Mammary epithelial cell (primary cell): ENCODE measurements at regions of chr9 and their contacts with region 1.

Region 1: DNA sequence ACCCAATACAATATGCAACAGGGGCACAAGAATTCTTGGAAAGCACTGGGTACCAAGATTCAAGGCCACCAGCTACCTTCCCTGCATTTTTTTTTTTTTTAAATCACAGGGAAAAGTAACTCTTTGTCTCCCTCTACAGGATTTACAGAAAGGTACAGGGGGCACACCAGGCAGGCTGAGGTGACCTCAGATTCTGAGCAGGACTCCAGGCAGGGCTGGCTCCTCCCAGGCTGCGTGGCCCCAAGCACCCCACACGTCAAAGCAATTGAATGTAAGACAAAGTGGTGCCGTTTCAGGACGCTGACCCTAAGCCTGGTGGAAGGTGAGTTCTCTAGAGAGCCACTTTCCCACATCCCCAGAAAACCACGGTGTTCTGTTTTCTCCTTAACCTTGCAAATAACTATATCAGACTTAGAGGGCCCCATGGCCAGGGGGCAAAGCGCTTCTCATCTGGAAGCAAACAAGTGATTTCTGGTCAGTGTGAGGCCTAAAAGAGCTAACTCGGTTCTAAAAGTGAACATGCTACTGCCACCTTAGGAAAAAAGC is 222.6 kb downstream of the ROR2 start:
- DNase-seq: peak; percentile 39
- H3K4me3 ChIP-seq: no peak overlapping the region
- H3K27ac ChIP-seq: no peak overlapping the region
- H3K4me1 ChIP-seq: no peaks in the 10 kb centered on the region
- H3K27me3 ChIP-seq: no peaks in the 10 kb centered on the region
- CTCF ChIP-seq: peak; percentile 71 to 77

Region 2: GRCh38 chr9:90985631-90986030 is 741.8 kb before region 1 on chr9:
- CTCF ChIA-PET with region 1: no interaction called
- dilution Hi-C with region 1: no loop called
- in situ Hi-C with region 1: no loop called
- intact Hi-C with region 1: loop called (anchors 10 kb)
- DNase-seq: peak; percentile 96
- H3K4me3 ChIP-seq: no peak overlapping the region
- H3K27ac ChIP-seq: peak overlapping the region; percentile 80
- H3K4me1 ChIP-seq: peaks cover 36% of the 10 kb centered on the region
- H3K27me3 ChIP-seq: no peaks in the 10 kb centered on the region
- CTCF ChIP-seq: no peak

Region 3: GRCh38 chr9:91591627-91592026 is 135.8 kb before region 1 on chr9:
- CTCF ChIA-PET with region 1: no interaction called
- dilution Hi-C with region 1: no loop called
- in situ Hi-C with region 1: no loop called
- intact Hi-C with region 1: no loop called
- DNase-seq: no peak
- H3K4me3 ChIP-seq: no peak overlapping the region
- H3K27ac ChIP-seq: no peak overlapping the region
- H3K4me1 ChIP-seq: no peaks in the 10 kb centered on the region
- H3K27me3 ChIP-seq: no peaks in the 10 kb centered on the region
- CTCF ChIP-seq: no peak

Region 4: GRCh38 chr9:91659529-91660495 is 67.6 kb before region 1 on chr9:
- CTCF ChIA-PET with region 1: no interaction called
- dilution Hi-C with region 1: no loop called
- in situ Hi-C with region 1: no loop called
- intact Hi-C with region 1: loop called (anchors 1 kb)
- DNase-seq: no peak
- H3K4me3 ChIP-seq: no peak overlapping the region
- H3K27ac ChIP-seq: no peak overlapping the region
- H3K4me1 ChIP-seq: no peaks in the 10 kb centered on the region
- H3K27me3 ChIP-seq: no peaks in the 10 kb centered on the region
- CTCF ChIP-seq: peak; percentile 43 to 50

Region 5: DNA sequence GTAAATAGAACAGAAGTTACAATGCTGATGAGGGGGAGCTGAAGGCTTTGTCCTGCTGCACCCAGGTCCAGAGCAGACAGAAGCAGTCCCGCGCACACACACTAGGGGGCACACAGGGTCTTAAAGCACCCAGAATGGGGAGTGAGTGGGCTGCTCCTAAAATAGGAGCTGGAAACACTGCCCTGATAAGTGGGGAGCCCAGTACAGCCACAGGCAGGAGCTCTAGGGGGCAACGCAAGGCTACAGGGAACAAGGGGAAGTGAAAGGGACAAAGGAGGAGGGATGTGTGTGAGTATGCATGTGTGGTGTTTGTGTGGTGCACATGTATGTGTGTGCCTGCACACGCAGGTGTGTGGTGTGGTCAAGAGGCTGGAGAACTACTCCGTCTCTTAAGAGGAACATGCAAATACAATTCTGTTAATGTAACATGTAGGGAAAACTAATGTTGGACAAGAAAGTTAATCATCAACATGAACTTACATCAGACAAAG is 31.1 kb after region 1 on chr9:
- CTCF ChIA-PET with region 1: no interaction called
- dilution Hi-C with region 1: no loop called
- in situ Hi-C with region 1: no loop called
- intact Hi-C with region 1: no loop called
- DNase-seq: peak; percentile 29
- H3K4me3 ChIP-seq: no peak overlapping the region
- H3K27ac ChIP-seq: no peak overlapping the region
- H3K4me1 ChIP-seq: no peaks in the 10 kb centered on the region
- H3K27me3 ChIP-seq: no peaks in the 10 kb centered on the region
- CTCF ChIP-seq: peak; percentile 76